CD8-positive, alpha-beta T cell (primary cell): ENCODE measurements at regions of chr17 and their contacts with region 1.

Region 1: DNA sequence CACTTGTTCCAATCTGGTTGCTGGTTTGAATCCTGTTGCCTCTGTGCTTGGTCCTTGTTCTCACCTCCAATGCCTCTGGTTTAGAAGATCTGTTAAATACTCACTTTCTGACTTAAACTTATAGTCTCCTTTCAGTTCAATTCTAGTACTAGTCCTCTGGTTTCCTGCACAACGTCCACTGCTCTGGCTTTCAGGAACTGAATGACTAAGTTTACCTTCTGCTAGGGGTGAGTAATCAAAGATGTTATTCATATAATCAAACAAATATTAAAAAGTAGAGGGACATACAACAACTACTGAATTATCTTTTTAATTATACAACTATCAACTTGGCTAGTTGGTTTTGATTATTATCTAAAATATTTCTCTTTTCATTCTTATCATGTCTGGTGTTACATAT is 496.4 kb upstream of the TOM1L1 start:
- DNase-seq: no peak
- ATAC-seq: no peak
- H3K4me3 ChIP-seq: no peak overlapping the region
- H3K4me3 Mint-ChIP-seq: no peak overlapping the region
- H3K27ac ChIP-seq: no peak overlapping the region
- H3K27ac Mint-ChIP-seq: no peak overlapping the region
- H3K4me1 ChIP-seq: no peaks in the 10 kb centered on the region
- H3K4me1 Mint-ChIP-seq: no peaks in the 10 kb centered on the region
- H3K27me3 ChIP-seq: no peaks in the 10 kb centered on the region
- H3K27me3 Mint-ChIP-seq: no peaks in the 10 kb centered on the region
- CTCF ChIP-seq: no peak

Region 2: GRCh38 chr17:54455251-54455868 is 51.1 kb after region 1 on chr17:
- CTCF ChIA-PET with region 1: no interaction called
- POLR2A ChIA-PET with region 1: no interaction called
- intact Hi-C with region 1: loop called in 1 of 2 experiments (anchors 10 kb)
- DNase-seq: no peak
- ATAC-seq: no peak
- H3K4me3 ChIP-seq: no peak overlapping the region
- H3K4me3 Mint-ChIP-seq: no peak overlapping the region
- H3K27ac ChIP-seq: no peak overlapping the region
- H3K27ac Mint-ChIP-seq: no peak overlapping the region
- H3K4me1 ChIP-seq: no peaks in the 10 kb centered on the region
- H3K4me1 Mint-ChIP-seq: no peaks in the 10 kb centered on the region
- H3K27me3 ChIP-seq: no peaks in the 10 kb centered on the region
- H3K27me3 Mint-ChIP-seq: no peaks in the 10 kb centered on the region
- CTCF ChIP-seq: no peak